ENCODE measurements at regions of chr6 and their contacts with region 1.

Region 1: DNA sequence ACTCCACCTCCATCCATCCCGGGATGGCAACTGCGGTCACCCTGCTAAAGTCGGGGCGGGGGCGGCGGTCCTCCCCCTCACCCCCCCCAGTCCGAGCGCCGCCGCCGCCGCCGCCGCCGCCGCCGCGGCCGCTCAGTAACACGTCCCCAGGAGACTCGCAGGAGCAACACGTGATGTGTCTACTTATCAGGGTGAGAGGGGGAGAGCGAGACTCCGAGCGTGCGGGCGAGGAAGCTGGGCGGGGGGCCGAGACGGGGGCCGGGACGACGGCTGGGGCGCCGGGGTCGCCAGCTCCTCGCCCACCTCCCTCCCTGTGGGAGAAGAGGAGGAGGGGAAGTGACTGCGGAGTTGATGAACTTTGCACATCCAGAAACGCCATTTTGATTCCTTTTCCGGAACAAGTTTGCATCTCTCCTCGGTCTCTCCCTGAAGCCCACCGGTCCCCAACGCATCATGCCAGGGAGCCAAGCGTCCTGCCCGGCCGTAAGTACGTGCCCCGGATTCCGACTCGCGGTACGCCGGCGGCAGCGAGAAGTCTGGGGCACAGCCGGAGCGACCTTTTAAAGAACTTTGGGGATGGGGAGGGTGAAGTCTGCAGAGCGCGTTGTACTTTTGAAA is at the start of gene RREB1:
- DNase-seq: peak; percentile 90 to 94 (median 92)
- ATAC-seq: peak; percentile 76
- H3K4me3 ChIP-seq: peak within 1 kb of the TSS; percentile 64
- H3K27ac ChIP-seq: peak within 1 kb of the TSS; percentile 92
- H3K4me1 ChIP-seq: peaks cover 37 to 38% of the 10 kb centered on the region in 2 experiments
- H3K27me3 ChIP-seq: no peaks in the 10 kb centered on the region
- CTCF ChIP-seq: no peak
- EP300 ChIP-seq: 0 out of 2 replicates have a peak, but pooled peaks have one; percentile 27
- POLR2A ChIP-seq: no peak; the same call in 1 of the 2 replicates
- RAD21 ChIP-seq: no peak
- polyA plus RNA-seq, gene RREB1: 3.3 to 4.8 TPM

Region 2: DNA sequence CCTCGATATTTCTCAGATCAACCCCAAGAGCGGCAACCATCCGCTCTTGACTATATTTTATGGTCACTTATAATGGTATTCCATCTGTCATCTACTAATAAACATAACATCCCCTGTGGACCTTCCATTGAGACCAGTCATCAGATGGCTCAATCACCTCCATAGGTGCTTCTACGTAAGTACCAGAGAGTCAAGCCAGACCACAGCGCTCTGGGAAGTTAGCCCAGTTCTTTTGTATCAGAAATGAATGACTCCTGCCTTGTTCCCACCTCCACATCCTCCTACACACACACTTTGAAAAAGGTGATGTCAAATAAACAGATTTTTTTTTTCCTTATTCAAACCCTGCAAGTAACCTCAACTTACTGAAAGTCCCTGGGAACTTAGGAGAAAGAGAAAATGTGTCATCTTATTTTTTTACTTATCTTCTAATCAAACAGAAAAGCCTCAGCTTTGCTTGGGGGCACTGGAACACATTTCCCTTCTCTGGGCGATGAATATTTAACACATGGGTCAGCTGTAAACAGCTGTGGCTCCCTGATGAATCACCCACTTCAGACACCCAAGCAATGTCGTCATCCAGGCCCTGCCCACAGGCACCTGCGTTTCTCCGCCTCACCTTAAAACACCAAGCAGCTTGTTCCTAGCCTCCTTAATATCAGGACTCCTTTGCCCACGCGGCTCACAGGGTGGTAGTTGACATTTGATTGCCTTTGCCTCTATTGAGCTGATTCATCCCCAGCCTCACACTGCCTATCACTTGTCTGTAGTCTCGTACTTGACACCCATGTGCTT is 640.5 kb before region 1 on chr6:
- CTCF ChIA-PET with region 1: no interaction called
- POLR2A ChIA-PET with region 1: no interaction called
- in situ Hi-C with region 1: no loop called
- intact Hi-C with region 1: no loop called
- DNase-seq: no peak
- ATAC-seq: no peak
- H3K4me3 ChIP-seq: no peak overlapping the region
- H3K27ac ChIP-seq: no peak overlapping the region
- H3K4me1 ChIP-seq: no peaks in the 10 kb centered on the region
- H3K27me3 ChIP-seq: peaks cover 0 to 4% of the 10 kb centered on the region in 2 experiments; a peak in 2 of 5 replicates
- CTCF ChIP-seq: no peak
- EP300 ChIP-seq: no peak
- POLR2A ChIP-seq: no peak
- RAD21 ChIP-seq: no peak

Region 3: DNA sequence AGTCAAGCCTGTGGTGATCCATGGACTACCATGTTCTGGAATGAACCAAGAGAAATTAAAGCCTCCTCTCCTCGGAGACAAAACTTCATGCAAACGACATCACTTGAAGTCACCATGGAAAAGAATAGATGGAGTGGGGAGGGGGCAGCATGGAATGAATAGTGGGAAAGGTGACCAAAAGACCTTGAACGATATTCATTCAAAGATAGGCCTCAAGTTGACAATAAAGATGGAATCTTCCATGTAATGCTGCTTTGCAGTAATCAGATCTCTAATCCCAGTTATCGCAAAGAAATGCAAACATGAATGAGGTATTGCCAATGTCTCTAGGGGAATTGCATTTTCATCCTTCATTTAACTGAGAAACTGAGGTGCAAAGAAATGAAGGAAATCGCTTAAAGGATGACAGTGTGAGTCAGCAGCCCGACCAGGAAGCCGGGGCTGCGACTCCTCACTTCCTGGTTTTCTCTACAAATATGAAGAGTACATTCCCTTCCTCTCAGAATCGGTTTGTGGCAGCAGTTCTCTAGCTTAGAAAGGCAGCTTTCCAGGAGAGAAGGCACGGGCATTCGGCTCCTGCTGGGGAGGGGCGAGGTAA is 65.5 kb before region 1 on chr6:
- CTCF ChIA-PET with region 1: interaction called, 7 read pairs
- POLR2A ChIA-PET with region 1: interaction called, 4 read pairs
- in situ Hi-C with region 1: no loop called
- intact Hi-C with region 1: loop called (anchors 2 kb)
- DNase-seq: peak; percentile 40 to 65 (median 50)
- ATAC-seq: peak; percentile 53
- H3K4me3 ChIP-seq: no peak overlapping the region
- H3K27ac ChIP-seq: peak overlapping the region; percentile 74
- H3K4me1 ChIP-seq: peaks cover 13 to 38% of the 10 kb centered on the region in 2 experiments
- H3K27me3 ChIP-seq: no peaks in the 10 kb centered on the region
- CTCF ChIP-seq: no peak
- EP300 ChIP-seq: no peak
- POLR2A ChIP-seq: no peak
- RAD21 ChIP-seq: no peak; a peak in 1 of 4 replicates

Region 4: DNA sequence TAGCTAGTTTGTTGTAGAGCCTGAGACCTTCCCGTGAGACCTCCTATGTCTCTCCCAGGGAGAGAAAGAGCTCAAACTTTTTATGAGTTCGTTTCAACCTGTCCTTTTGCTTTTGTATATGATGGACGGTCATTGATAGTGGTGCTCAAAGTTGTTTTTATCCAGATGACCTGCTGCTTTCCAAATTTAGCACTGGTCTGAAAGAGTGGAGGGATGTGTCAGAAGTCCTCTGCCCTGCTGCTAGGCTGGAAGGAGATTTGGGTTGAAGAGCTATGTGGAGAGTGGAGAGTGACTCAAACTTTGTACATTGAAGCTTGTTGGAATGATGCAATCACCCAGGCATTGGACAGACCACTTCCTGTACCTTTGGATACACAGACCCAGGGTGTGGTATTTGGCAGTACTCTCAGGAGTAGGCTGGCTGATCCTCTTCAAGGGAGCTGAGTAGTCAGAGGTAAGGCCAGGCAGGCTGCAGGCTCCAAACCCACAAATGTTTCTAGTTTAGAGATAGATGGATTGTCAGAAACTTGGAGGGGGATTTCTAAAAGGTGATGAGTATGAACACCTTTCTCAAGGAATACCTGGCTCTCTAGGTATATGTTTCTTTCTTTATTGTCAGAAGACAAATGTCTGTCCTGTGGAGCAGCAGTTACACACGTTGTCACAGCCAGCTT is 49.3 kb before region 1 on chr6:
- CTCF ChIA-PET with region 1: no interaction called
- POLR2A ChIA-PET with region 1: interaction called, 3 read pairs
- in situ Hi-C with region 1: no loop called
- intact Hi-C with region 1: loop called (anchors 5 kb)
- DNase-seq: peak; percentile 54 to 92 (median 71)
- ATAC-seq: peak; percentile 95
- H3K4me3 ChIP-seq: no peak overlapping the region
- H3K27ac ChIP-seq: peak overlapping the region; percentile 86
- H3K4me1 ChIP-seq: peaks cover 10 to 36% of the 10 kb centered on the region in 2 experiments
- H3K27me3 ChIP-seq: no peaks in the 10 kb centered on the region
- CTCF ChIP-seq: no peak
- EP300 ChIP-seq: peak; percentile 86
- POLR2A ChIP-seq: peak; percentile 64
- RAD21 ChIP-seq: peak; percentile 25 to 57

Region 5: GRCh38 chr6:7119272-7119801 is 11.7 kb after region 1 on chr6:
- CTCF ChIA-PET with region 1: no interaction called
- POLR2A ChIA-PET with region 1: interaction called, 19 read pairs
- in situ Hi-C with region 1: no loop called
- intact Hi-C with region 1: no loop called
- DNase-seq: peak; percentile 60 to 86 (median 72)
- ATAC-seq: peak; percentile 82
- H3K4me3 ChIP-seq: peak overlapping the region; percentile 2; the same call in 1 of the 2 replicates
- H3K27ac ChIP-seq: peak overlapping the region; percentile 68
- H3K4me1 ChIP-seq: peaks cover 38 to 45% of the 10 kb centered on the region in 2 experiments
- H3K27me3 ChIP-seq: no peaks in the 10 kb centered on the region
- CTCF ChIP-seq: no peak
- EP300 ChIP-seq: peak; percentile 66; the same call in 1 of the 2 replicates
- POLR2A ChIP-seq: peak; percentile 76
- RAD21 ChIP-seq: no peak

Region 6: DNA sequence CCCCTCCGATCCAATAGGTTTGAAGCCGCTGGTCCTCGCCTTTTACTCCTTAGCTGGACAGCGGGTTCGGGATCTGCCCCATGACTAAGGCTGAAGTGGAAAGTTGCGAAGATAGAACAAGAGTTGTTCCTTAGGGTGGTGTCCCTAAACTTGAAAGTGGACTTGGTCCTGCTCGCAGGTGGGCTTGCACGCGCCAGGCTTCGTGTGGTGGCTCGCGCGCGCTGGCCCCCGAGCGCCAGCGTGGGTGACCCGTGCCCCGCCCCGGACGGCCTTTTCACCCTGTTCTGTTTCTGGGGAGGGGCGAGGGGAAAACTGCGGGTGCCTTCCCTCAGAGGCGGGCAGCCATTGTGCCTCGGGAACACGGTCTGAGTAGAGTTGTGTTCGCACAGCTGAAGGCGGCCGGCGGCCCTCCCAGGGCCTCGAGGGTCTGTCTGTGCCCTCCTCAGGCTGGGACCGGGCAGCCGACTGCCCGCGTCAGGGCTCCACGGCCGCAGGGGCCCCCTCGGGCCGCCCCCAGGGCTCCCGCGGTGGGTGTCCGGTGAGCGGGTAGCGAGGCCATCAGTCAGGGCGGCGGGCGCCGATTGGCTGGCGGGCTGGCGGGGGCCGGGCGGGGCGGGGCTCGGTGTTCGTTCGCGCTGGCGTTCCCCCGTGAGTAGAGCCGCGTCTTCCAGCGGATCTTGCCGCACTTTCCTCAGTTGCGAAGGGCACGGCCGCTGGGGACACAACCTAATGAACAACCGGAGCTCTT is 33.1 kb after region 1 on chr6:
- CTCF ChIA-PET with region 1: no interaction called
- POLR2A ChIA-PET with region 1: interaction called, 7 read pairs
- in situ Hi-C with region 1: no loop called
- intact Hi-C with region 1: loop called (anchors 2 kb)
- DNase-seq: peak; percentile 91 to 99 (median 99)
- ATAC-seq: peak; percentile 84
- H3K4me3 ChIP-seq: peak overlapping the region; percentile 39
- H3K27ac ChIP-seq: peak overlapping the region; percentile 92
- H3K4me1 ChIP-seq: peaks cover 45 to 81% of the 10 kb centered on the region in 2 experiments
- H3K27me3 ChIP-seq: no peaks in the 10 kb centered on the region
- CTCF ChIP-seq: no peak
- EP300 ChIP-seq: no peak; the same call in 1 of the 2 replicates
- POLR2A ChIP-seq: peak; percentile 86
- RAD21 ChIP-seq: no peak

Region 7: GRCh38 chr6:7166410-7167305 is 59.0 kb after region 1 on chr6:
- CTCF ChIA-PET with region 1: no interaction called
- POLR2A ChIA-PET with region 1: interaction called, 3 read pairs
- in situ Hi-C with region 1: no loop called
- intact Hi-C with region 1: loop called (anchors 1 kb)
- DNase-seq: peak; percentile 82 to 93 (median 84)
- ATAC-seq: peak; percentile 70
- H3K4me3 ChIP-seq: peak overlapping the region; percentile 6; the same call in 1 of the 2 replicates
- H3K27ac ChIP-seq: peak overlapping the region; percentile 88
- H3K4me1 ChIP-seq: peaks cover 78 to 94% of the 10 kb centered on the region in 2 experiments
- H3K27me3 ChIP-seq: no peaks in the 10 kb centered on the region
- CTCF ChIP-seq: no peak
- EP300 ChIP-seq: peak; percentile 95
- POLR2A ChIP-seq: peak; percentile 17; the same call in 1 of the 2 replicates
- RAD21 ChIP-seq: peak in 1 of 2 experiments; percentile 14; a peak in 1 of 4 replicates

Region 8: GRCh38 chr6:7201688-7202541 is 94.2 kb after region 1 on chr6:
- CTCF ChIA-PET with region 1: interaction called, 3 read pairs
- POLR2A ChIA-PET with region 1: interaction called, 3 read pairs
- in situ Hi-C with region 1: no loop called
- intact Hi-C with region 1: loop called (anchors 2 kb)
- DNase-seq: peak; percentile 86 to 94 (median 91)
- ATAC-seq: peak; percentile 80
- H3K4me3 ChIP-seq: peak overlapping the region; percentile 49
- H3K27ac ChIP-seq: peak overlapping the region; percentile 96
- H3K4me1 ChIP-seq: peaks cover 11 to 35% of the 10 kb centered on the region in 2 experiments; a peak in 4 of 5 replicates
- H3K27me3 ChIP-seq: no peaks in the 10 kb centered on the region
- CTCF ChIP-seq: no peak
- EP300 ChIP-seq: peak; percentile 87
- POLR2A ChIP-seq: peak; percentile 92
- RAD21 ChIP-seq: peak; percentile 19 to 43; a peak in 2 of 4 replicates